Vagina (tissue), 2 donors: ENCODE measurements at regions of chr10 and their contacts with region 1.

Region 1: DNA sequence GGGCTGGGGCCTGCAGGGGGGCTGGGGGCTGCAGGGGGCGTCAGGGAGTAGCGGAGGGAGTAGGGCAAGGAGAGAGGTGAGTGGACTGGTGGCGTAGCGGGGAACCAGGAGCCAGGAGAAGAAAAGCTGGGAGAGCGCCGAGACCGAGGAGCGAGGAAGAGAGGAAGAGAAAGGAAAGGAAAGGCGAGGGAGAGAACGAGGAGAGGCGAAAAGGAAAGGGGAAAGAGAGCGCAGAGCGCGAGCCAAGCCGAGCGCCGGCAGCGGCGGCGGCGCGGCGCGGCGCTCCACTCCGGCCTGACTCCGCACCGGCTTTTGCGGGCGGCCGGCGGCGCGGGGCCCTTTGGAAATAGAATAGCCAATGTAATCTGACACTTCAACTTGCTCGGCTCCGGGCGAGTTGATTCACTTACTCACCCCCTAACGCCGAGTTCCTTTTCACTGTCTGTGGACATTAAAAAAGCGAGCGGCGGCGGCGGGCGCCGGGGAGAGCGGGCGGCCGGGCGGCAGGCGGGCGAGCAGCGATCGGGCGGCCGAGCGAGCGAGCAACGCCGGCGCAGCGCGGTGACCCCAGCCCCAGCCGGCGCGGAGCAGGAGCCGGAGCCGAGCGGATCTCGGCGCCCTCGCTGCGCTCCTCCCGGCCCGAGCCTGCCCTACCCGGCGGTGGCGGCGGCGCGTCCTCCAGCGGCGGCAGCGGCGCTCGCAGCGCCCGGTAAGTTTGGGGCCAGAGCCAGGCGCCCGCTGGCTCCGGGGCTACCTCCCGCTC is at the start of gene ZMIZ1:
- DNase-seq: no peak
- H3K4me3 ChIP-seq: peak within 1 kb of the TSS; percentile 72 to 96
- H3K27ac ChIP-seq: peak within 1 kb of the TSS; percentile 97
- H3K4me1 ChIP-seq: peaks cover 34% of the 10 kb centered on the region
- H3K27me3 ChIP-seq: no peaks in the 10 kb centered on the region
- CTCF ChIP-seq: no peak
- POLR2A ChIP-seq: peak in 1 of 2 donors; percentile 93
- total RNA-seq, gene ZMIZ1: 61.4 TPM

Region 2: GRCh38 chr10:78302989-78303854 is 765.5 kb before region 1 on chr10:
- intact Hi-C with region 1: loop called (anchors 5 kb)
- DNase-seq: peak; percentile 93 to 96
- H3K4me3 ChIP-seq: peak overlapping the region; percentile 56 to 61
- H3K27ac ChIP-seq: peak overlapping the region; percentile 84
- H3K4me1 ChIP-seq: peaks cover 12% of the 10 kb centered on the region
- H3K27me3 ChIP-seq: no peaks in the 10 kb centered on the region
- CTCF ChIP-seq: peak; percentile 12 to 76 (median 47)
- POLR2A ChIP-seq: peak in 1 of 2 donors; percentile 31

Region 3: DNA sequence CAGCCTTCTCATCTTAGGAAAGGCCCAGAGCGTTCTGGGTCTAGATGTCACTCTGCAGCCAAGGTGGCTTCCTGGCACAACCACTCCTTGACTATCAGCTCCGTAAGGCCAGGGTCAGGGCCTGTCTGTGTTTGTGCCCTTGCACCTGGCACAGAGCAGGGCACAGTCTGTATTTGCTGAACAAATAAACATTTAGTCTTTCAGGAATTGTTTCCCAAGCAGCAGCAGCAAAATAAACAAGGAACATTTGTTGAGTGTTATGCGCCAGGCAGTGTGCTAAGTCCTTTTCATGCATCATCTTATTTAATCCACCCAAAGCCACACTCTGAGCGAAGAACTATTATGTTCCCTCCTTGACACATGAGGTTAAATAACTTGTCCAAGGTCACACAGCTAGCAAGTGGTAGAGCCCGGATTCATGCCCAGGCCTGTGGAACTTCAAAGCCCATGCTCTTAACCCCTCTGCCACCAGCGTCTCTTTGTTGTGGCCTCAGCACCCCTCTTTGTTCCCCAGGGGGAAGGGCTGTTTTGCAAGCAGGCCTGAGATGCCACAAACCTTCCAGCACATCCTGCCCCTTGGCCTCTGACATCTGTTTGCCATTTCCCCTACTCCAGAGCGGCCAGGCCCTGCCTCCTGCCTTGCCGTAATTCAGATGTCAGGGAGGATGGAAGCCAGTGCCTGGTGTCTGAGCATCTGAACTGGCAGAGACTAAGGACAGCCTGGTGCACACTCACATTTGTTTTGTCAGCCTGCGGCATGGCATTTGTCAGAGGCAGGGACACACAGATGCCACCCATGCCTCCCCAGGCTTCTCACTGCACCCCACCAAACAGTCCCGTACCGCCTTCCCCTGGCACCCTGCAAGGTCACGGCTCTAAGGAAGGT is 325.8 kb before region 1 on chr10:
- intact Hi-C with region 1: no loop called
- DNase-seq: no peak
- H3K4me3 ChIP-seq: no peak overlapping the region
- H3K27ac ChIP-seq: no peak overlapping the region
- H3K4me1 ChIP-seq: peaks cover 33% of the 10 kb centered on the region
- H3K27me3 ChIP-seq: no peaks in the 10 kb centered on the region
- CTCF ChIP-seq: no peak
- POLR2A ChIP-seq: no peak

Region 4: DNA sequence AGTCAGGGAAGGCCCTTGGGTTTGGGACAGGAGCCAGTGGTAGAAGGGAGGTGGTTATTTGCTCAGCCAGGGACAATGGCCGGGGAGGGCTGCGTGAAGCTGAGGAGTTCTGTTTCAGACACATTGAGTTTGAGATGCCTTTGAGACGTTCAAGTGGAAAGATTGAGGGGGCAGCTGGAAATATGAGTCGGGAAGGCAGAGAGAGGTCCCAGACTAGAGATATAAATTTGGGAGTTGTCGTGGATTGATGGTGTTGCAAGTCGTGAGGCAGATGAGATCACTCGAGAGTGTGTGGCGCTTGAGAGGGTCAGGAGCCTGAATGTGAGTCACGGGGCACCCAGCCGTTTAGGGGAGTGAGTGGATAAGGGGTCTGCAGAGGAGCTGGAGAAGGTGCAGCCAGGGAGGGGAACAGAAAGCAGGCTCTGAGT is 73.3 kb after region 1 on chr10:
- intact Hi-C with region 1: loop called (anchors 5 kb)
- DNase-seq: peak in 1 of 2 donors; percentile 97
- H3K4me3 ChIP-seq: no peak overlapping the region
- H3K27ac ChIP-seq: peak overlapping the region; percentile 88
- H3K4me1 ChIP-seq: peaks cover 97% of the 10 kb centered on the region
- H3K27me3 ChIP-seq: no peaks in the 10 kb centered on the region
- CTCF ChIP-seq: no peak
- POLR2A ChIP-seq: no peak